Prostate gland (tissue), 2 donors: ENCODE measurements at regions of chr1 and their contacts with region 1.

Region 1: DNA sequence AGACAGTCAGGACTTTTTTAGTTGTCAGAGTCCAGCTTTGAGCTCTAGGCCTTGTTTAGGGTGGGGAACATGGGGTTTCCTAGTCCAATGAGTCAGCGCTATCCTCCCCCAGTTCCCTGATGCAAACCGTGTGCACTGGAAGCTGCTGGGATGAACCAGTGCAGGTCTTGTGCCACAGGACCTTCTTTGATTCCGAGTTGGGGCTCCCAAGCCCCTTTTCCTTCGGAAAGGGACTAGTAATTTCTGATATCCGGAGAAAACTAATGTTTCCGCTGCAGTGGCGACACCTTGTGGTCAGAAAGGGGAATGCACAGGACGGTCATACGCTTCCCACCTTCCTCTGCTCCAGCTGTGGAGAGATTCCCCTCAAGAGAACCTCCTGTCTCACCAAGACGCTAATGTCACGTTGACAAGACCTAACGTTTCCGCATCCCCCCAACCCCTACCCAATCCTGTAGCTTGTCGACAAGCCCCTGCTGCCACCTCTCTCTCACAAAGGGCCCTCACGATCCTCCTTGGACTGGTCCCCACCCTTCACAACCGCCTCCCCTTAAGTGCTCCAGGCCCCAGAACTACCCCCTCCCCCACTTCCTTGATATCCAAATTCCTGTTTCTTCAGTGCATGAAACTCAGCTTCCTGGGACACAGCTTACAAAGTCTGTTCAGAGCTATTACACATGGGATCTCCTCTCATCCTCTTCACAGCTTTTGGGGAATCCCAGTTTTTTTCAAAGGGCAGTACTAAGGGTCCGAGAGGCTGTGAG is 30.9 kb downstream of the GPA33 start:
- DNase-seq: peak; percentile 55
- H3K4me3 ChIP-seq: no peak overlapping the region
- H3K27ac ChIP-seq: no peak overlapping the region
- H3K4me1 ChIP-seq: no peaks in the 10 kb centered on the region
- H3K27me3 ChIP-seq: no peaks in the 10 kb centered on the region
- CTCF ChIP-seq: peak; percentile 87 to 98 (median 88)
- POLR2A ChIP-seq: no peak

Region 2: DNA sequence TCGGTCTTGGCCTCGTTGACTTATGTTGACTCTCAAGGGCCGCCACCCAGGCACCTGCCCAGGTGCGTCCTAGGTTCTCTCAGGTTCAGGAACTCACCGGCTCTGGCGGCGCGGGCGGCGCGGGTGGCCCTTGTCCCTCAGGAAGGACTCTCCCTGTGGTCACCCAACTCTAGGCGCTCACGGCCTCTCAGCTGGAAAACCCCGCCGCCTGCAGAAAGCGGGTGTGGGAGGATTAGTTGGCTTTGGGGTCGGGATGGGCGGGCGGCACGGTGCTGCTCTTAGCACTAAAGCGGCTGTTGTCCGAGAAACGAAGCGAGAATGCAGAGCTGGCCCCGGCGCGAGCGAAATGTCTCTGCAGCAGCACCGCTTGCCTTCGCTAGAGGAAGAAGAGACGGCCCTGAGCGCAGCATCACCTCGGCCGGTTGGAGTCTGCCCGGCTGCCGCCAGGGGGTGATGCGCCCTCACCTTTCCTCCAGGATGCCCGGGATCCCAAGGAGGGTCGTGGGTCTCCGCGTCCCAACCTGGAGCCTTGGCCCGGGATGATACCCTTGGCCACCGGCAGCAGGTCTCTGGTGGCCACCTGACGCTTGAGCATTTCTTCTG is 175.1 kb before region 1 on chr1:
- intact Hi-C with region 1: loop called (anchors 1 kb)
- DNase-seq: peak; percentile 10
- H3K4me3 ChIP-seq: no peak overlapping the region
- H3K27ac ChIP-seq: no peak overlapping the region
- H3K4me1 ChIP-seq: no peaks in the 10 kb centered on the region
- H3K27me3 ChIP-seq: peaks cover 3% of the 10 kb centered on the region
- CTCF ChIP-seq: peak in 3 of 4 experiments; percentile 33 to 60 (median 53)
- POLR2A ChIP-seq: no peak

Region 3: GRCh38 chr1:166907763-166908162 is 151.5 kb before region 1 on chr1:
- intact Hi-C with region 1: loop called (anchors 2 kb)
- DNase-seq: no peak
- H3K4me3 ChIP-seq: no peak overlapping the region
- H3K27ac ChIP-seq: no peak overlapping the region
- H3K4me1 ChIP-seq: no peaks in the 10 kb centered on the region
- H3K27me3 ChIP-seq: no peaks in the 10 kb centered on the region
- CTCF ChIP-seq: no peak
- POLR2A ChIP-seq: no peak